AG04450 (cell line): ENCODE measurements at regions of chr17 and their contacts with region 1.

Region 1: DNA sequence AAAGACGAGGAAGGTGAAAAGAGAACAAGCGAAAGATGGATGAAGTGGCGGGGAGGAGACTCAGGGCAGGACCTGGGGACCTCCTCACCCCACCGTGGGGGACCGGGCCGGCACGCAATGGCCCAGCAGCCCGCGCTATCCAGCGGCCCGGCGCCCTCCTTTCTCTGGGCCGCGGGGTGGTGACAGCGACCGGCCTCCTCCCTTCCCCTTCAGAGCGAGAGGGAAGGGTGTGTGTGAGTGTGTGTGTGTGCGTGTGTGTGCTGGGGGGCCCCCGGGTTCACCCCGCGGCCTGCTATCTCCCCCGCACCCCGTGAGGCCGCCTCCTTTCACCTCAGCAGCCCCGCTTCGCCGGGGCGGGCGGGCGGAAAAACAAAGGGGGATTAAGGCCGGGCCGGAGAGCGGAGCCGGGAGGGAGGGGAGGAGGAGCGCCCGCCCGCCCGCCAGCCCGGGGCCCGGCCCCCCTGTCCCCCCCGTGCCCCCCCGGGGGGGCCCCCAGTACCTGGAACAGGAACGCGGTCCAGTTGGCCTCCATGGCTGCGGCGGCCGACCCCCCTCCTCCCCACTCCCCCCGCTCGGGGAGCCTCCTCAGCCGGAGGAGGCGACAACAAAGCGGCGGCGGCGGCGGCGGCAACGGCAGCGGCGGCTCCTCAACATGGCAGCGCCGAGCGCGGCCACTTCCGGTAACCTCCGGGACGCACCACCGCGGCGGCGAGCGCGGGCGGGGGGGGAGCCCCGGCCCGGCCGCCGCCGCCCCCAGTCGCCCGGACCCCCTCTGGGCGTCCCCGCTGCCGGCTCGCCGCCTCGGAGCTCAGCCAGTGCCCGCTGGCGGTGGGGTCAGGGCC is at the start of gene VEZF1:
- DNase-seq: no peak
- H3K4me3 ChIP-seq: peak within 1 kb of the TSS; percentile 79
- H3K27ac ChIP-seq: peak within 1 kb of the TSS; percentile 96
- H3K27me3 ChIP-seq: no peaks in the 10 kb centered on the region
- CTCF ChIP-seq: no peak
- polyA plus RNA-seq, gene VEZF1: 34.2 and 38.9 TPM in 2 replicates

Region 2: GRCh38 chr17:57855391-57856035 is 132.3 kb before region 1 on chr17:
- CTCF ChIA-PET with region 1: interaction called, 661 read pairs
- POLR2A ChIA-PET with region 1: interaction called, 6 read pairs
- DNase-seq: no peak
- H3K4me3 ChIP-seq: no peak overlapping the region
- H3K27ac ChIP-seq: peak overlapping the region; percentile 11
- H3K27me3 ChIP-seq: no peaks in the 10 kb centered on the region
- CTCF ChIP-seq: no peak

Region 3: DNA sequence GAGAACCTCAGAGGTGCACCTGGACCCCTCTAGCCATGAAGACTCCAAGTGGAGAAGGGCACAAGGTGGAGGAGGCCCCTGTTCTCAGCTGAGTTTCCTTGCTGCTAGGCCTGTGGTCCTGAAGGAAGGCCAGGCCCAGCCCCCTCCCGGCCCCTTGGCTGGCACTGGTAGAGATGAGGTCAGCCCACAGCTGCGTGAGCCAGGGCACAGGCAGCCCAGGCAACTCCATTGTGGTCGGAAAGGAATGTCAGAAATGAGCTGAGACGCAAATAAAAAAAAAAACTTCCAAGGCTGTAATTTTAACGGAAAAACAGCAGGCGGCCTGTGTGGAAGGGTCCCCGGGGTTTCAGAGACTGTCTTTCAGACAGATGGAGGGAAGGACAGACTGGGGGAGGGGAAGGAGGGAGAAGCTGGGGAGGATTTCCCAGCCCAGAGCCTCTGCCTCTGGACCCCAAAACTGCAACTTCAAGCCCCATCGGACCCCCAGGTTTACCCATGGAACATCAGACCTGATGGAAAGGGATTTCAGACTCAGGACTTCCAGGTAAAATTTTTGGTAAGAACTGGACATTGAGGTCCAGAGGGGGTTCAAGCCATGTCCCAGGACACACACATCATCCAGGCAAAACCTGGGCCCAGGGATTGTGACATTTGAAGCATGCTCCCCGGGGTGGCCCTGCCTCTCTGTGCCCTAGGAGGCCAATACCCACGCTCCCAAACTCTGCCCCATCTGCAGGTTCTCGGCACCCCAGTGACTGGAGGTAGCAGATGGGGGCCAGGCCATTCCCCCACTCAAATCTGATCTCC is 112.3 kb before region 1 on chr17:
- CTCF ChIA-PET with region 1: interaction called, 5 read pairs
- POLR2A ChIA-PET with region 1: interaction called, 11 read pairs
- DNase-seq: peak; percentile 97
- H3K4me3 ChIP-seq: peak overlapping the region; percentile 42
- H3K27ac ChIP-seq: peak overlapping the region; percentile 100
- H3K27me3 ChIP-seq: no peaks in the 10 kb centered on the region
- CTCF ChIP-seq: peak; percentile 79

Region 4: DNA sequence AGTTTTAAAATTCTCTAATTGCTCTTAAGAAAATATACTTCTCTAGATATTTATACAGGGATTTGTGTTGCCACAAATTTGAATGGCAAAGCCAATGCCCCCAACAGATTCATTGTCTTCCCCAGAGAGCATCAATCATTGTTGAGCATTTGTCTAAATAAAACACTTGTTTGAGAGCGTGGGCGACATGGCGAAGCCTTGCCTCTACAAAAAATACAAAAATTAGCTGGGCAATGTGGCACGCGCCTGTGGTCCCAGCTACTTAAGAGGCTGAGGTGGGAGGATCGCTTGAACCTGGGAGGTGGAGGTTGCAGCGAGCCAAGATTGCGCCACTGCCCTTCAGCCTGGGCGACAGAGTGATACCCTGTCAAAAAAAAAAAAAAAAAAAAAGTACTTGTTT is 32.6 kb after region 1 on chr17:
- CTCF ChIA-PET with region 1: no interaction called
- POLR2A ChIA-PET with region 1: no interaction called
- DNase-seq: no peak
- H3K4me3 ChIP-seq: no peak overlapping the region
- H3K27ac ChIP-seq: no peak overlapping the region
- H3K27me3 ChIP-seq: peaks cover 4% of the 10 kb centered on the region
- CTCF ChIP-seq: no peak